Right ventricle myocardium inferior (tissue), 1 donor: ENCODE measurements at regions of chr17 and their contacts with region 1.

Region 1: DNA sequence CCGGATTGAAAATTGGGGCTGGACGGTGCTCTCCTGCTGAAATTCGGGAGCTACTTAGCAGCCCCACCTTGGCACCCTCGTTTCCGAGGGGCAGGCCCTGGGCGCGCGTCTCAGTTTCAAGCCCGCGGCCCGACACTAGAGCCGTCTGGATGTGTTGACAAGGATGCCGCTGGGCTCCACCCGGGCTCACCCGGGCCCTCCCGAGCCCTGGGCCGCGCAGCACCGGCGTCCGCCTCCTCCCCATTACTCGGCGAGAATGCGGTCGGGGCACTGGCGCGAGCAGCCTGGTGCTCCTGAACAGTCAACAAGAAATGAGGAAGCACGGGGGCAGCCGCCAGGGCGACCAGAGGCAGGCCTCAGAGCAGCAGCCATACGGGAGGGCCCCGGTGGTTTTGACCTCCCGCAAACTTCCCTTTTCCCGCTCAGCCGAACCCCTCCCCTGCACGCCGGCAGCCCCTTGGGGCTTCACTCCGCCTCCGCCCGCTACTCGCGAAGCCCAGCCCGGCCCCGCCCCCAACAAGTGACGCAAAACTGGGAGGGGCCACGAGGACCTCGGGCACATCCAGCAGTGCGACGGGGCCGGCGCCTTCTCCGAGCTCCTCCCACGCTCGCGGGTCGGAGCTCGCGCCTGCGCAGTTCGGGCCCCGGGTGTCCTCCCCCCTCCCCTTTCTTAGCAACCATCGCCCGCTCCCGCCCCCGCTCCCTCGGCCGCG is 447 bp upstream of the SEC14L1 start:
- DNase-seq: peak; percentile 100
- ATAC-seq: peak; percentile 98

Region 2: DNA sequence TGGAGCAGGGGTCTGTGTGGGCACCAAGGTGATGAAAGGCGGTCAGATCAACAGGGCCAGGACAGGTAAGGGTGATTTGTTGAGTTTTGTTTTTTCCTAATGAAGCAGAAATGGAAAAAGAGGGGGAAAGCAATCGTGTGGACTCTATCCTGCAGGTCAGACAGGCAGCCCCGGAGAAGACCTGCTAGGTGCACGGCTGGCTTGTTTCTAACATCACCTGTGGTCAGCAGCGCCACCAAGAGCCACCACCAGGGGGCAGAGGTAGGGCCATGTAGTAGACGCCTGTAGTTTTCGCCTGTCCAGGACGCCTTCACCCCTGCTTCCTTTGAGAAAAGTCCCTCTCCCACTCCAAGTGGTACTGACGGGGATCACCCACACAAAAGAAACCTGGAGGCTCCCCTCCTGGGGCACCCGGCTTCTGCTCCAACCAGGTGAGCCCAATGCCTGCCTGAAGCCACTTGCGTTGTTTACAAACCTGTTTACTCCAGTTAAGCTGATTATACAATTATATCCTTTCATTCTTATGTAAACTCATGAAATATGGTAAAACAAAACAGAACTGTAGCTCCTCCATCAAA is 53.8 kb before region 1 on chr17:
- intact Hi-C with region 1: no loop called
- DNase-seq: peak; percentile 93
- ATAC-seq: peak; percentile 51

Region 3: GRCh38 chr17:77096570-77097214 is 43.6 kb before region 1 on chr17:
- intact Hi-C with region 1: loop called (anchors 2 kb)
- DNase-seq: no peak
- ATAC-seq: peak; percentile 57

Region 4: DNA sequence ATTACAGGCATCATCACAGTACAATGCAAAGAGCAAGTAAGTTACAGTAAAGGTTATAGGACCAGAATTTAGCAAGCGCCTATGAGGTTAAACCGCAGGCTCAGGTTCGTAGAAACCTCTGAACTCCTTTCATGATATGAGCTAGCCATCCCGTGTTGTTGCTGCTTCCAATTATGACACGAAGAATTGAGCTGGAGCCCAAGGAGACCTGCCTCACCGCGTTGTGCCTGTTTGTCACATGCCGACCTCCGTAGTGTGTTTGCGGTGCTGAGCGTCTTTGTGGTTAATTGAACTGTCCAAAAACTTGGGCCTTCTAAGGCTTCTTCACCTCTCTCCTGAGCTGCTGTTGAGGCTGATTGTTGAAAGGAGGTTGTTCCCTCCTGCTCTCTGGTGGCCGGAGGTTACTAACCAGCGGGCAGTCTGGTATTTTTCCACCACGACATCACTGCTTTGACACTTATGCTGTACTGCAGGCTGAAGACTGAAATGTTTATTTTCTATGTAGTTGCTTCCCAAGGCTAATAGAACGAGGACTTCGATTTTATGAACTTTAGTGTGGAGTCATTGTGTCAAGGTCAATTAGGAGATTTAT is 68.0 kb after region 1 on chr17:
- intact Hi-C with region 1: loop called (anchors 2 kb)
- DNase-seq: no peak
- ATAC-seq: peak; percentile 71

Region 5: GRCh38 chr17:77214743-77215142 is 74.4 kb after region 1 on chr17:
- intact Hi-C with region 1: loop called (anchors 1 kb)
- DNase-seq: no peak
- ATAC-seq: peak; percentile 75

Region 6: DNA sequence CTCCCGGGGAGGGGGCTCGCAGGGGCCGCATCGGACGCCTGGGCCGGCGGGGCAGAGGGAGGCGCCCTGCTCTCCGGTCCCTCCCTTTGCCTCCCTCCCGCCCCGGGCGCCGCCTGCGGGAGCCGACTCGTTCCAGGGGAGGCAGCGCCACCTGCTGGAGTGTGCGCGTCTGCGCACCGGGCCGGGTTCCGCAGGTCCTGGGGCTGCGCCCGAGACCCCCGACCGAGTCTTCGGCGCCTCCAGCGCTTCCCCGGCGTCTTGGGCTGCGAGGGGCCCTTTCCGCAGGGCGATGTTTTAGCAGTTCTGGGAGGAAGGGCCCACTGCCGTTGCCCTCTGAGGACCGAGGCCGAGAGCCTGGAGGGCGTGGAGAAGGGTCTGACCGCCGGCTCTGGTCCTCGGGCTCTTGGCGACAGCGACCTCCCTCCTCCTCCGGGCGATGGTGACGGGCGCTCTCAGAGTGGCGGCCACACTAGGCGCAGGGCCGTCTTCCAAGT is 106.8 kb after region 1 on chr17:
- intact Hi-C with region 1: no loop called
- DNase-seq: peak; percentile 94
- ATAC-seq: peak; percentile 96

Region 7: DNA sequence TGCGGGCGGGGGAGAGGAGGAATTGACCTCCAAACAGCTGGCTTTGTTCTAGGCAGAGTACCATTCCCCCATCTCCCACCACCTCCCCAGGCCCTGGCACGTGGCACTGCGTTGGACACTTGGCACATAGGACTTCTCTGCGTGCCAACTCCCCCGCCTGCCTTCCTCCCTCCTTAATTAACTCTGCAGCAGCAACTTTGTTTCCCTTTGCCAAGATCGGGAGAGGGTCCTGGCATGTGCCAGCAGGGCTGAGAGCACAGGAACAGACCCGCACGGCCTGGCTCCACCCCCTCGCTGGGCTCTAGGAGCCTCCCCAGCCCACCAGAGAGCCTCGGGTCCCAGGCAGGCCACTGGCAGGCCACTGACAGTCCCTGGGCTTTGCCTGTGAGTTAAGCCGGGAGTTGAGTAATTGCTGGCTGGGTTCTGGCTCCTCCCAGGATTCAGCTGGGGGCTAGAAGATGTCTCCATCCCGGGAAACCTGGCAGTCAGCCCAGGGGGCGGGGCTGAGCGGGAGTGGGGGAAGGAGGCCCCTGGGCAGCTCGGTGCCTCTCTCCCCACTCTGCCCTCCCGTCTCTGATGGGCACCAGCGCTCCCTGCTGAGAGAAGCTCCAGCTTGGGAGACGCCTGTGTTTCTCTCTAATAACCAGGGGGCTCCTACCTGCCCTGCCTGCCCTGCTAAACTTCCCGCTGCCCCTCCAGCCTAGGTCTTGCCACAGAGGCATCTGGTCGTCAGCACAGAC is 594.2 kb after region 1 on chr17:
- intact Hi-C with region 1: no loop called
- DNase-seq: peak; percentile 93
- ATAC-seq: peak; percentile 78